Gastrocnemius medialis (tissue), 4 donors: ENCODE measurements at regions of chr12 and their contacts with region 1.

Region 1: DNA sequence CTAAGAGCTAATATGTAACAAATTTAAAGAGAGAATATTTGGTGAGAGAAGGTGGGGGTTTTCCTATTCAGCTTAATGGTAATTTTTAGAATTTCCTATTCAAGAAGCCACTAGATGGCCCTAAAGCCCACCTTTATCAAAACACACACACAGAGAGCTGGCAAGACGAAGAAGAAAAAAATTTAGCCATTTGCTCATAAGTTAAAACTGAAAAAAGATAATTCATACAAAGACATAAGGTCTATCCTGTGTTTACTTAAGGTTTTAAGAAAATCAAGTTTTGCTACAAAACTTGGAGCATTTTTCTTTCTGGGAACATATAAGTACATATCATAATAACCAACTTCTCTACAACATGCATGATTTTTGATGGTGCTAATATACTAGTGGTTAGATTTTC is 46.8 kb upstream of the PCED1B start:
- DNase-seq: no peak
- ATAC-seq: peak; percentile 77 to 83
- H3K4me3 ChIP-seq: no peak overlapping the region
- H3K27ac ChIP-seq: peak overlapping the region in 2 of 4 donors; percentile 18 to 74
- H3K4me1 ChIP-seq: peaks cover 0 to 5% of the 10 kb centered on the region in 2 donors
- H3K27me3 ChIP-seq: no peaks in the 10 kb centered on the region
- CTCF ChIP-seq: peak; percentile 15 to 66 (median 50)
- POLR2A ChIP-seq: no peak

Region 2: GRCh38 chr12:47071241-47071852 is 38.7 kb after region 1 on chr12:
- in situ Hi-C with region 1: no loop called
- intact Hi-C with region 1: loop called (anchors 5 kb)
- DNase-seq: no peak
- ATAC-seq: no peak
- H3K4me3 ChIP-seq: no peak overlapping the region
- H3K27ac ChIP-seq: no peak overlapping the region
- H3K4me1 ChIP-seq: no peaks in the 10 kb centered on the region
- H3K27me3 ChIP-seq: peaks cover 0 to 6% (median 0%) of the 10 kb centered on the region in 3 donors
- CTCF ChIP-seq: peak in 3 of 5 experiments; percentile 14 to 43 (median 15)
- POLR2A ChIP-seq: no peak

Region 3: DNA sequence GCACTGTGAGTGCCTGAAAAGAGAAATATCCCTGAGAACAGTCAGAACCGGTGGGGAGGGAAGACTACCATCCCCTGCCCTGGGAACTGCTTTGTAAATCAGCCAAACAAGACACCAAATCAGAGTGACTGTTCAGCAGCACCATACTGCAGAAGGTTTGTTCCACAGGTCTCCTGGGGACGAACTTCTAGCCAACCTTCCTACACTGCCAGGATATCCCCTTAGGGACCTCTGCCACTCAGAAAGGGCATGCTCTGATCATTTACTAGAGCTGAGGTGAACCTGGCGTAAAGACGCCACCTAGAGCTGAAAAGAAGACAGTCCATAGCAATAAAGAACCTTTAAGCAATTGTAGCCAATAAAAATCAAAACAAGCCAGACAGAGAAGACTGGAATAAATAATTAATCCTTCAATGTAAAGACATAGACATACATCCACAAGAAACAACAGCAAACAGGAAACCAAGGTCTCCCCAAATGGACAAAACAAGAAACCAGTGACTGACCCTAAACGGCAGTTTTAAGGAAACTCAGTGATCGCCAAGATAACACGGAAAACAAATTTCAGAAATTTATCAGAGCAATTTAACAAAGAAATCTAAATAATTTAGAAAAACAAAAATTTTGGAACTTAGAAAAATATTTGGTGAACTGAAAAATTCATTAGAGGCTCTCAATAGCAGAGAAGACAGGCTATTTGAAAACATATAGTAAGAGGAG is 275.2 kb after region 1 on chr12:
- in situ Hi-C with region 1: no loop called
- intact Hi-C with region 1: loop called (anchors 5 kb)
- DNase-seq: no peak
- ATAC-seq: no peak
- H3K4me3 ChIP-seq: no peak overlapping the region
- H3K27ac ChIP-seq: no peak overlapping the region
- H3K4me1 ChIP-seq: no peaks in the 10 kb centered on the region
- H3K27me3 ChIP-seq: no peaks in the 10 kb centered on the region
- CTCF ChIP-seq: peak in 1 of 5 experiments; percentile 22
- POLR2A ChIP-seq: no peak

Region 4: DNA sequence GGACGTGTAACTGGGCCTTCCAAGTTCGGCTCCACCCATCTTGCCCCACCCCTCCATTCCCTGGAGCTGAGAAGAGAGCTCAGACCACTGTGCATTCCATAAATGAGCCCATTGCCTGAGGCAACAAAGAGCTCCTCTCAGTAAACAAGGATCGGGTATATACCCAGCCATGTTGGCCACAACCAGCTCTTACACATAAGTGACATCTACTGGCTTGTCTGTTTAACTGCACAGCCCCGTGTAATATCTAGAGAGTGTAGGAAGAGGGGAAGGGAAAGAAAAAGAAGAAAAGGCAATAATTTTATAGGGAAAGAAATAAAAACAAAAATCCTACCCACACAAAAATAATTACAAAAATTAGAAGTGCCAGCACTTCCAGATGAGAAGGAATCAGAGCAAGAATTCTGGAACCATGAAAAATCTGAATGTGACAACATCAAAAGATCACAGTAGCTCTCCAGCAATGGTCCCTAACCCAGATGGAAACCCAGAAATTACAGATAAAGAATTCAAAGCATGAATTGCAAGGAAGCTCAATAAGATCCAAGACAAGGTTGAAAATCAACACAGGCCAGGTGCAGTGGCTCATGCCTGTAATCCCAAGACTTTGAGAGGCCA is 365.1 kb after region 1 on chr12:
- in situ Hi-C with region 1: loop called in 2 of 4 experiments (anchors 10 kb)
- intact Hi-C with region 1: loop called (anchors 2 kb)
- DNase-seq: peak in 1 of 2 donors; percentile 21
- ATAC-seq: peak in 1 of 2 donors; percentile 84
- H3K4me3 ChIP-seq: no peak overlapping the region
- H3K27ac ChIP-seq: no peak overlapping the region
- H3K4me1 ChIP-seq: peaks cover 0 to 7% of the 10 kb centered on the region in 2 donors
- H3K27me3 ChIP-seq: no peaks in the 10 kb centered on the region
- CTCF ChIP-seq: peak in 3 of 5 experiments; percentile 13 to 44 (median 21)
- POLR2A ChIP-seq: no peak

Region 5: GRCh38 chr12:47636908-47637780 is 604.5 kb after region 1 on chr12:
- in situ Hi-C with region 1: no loop called
- intact Hi-C with region 1: loop called (anchors 5 kb)
- DNase-seq: no peak
- ATAC-seq: no peak
- H3K4me3 ChIP-seq: no peak overlapping the region
- H3K27ac ChIP-seq: no peak overlapping the region
- H3K4me1 ChIP-seq: no peaks in the 10 kb centered on the region
- H3K27me3 ChIP-seq: no peaks in the 10 kb centered on the region
- CTCF ChIP-seq: peak in 1 of 5 experiments; percentile 23
- POLR2A ChIP-seq: no peak

Region 6: GRCh38 chr12:47651368-47652254 is 619.0 kb after region 1 on chr12:
- in situ Hi-C with region 1: loop called in 1 of 4 experiments (anchors 25 kb)
- intact Hi-C with region 1: no loop called
- DNase-seq: peak; percentile 19 to 32
- ATAC-seq: peak; percentile 77 to 85
- H3K4me3 ChIP-seq: peak overlapping the region in 3 of 4 donors; percentile 8 to 13 (median 10)
- H3K27ac ChIP-seq: no peak overlapping the region
- H3K4me1 ChIP-seq: no peaks in the 10 kb centered on the region
- H3K27me3 ChIP-seq: no peaks in the 10 kb centered on the region
- CTCF ChIP-seq: peak; percentile 49 to 74 (median 54)
- POLR2A ChIP-seq: no peak

Region 7: DNA sequence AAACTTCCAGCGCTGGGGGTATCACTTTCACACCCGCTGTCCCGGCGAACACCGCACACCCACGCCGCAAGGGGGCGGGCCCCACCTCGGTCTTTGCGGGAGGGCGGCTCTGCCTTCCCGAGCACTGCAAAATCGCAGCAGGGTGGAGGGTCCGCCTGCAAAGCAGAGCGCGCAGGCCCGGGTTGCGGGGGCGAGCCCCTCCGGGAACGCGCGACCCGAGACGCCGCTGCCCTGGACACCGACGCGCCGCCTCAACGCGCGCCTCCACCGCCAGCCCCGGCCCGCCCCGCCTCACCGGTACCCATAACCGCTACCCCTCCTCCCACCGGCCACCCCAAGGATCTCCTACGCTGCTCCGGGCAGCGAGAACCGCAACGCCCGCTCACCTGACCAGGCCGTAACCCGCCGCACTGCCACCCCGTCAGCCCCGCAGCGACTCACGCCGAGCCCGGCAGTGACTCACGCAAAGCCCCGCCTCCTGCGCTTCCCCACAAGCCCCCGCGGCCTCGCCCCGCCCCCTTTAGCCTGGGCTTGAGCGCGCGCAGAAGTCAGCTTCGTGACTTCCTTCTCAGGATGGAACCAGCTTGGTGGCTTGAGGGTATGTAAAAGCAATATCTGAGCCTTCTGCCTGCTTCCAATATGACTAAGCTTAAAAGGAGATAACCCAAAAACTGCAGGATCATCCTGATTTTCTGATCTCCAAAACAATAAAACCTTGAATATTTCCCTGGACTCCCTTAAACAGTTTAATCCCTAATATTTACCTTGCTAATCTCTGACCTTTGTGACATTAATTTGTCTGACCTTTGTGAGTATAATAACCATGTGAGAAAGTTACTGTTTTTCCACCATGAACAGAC is 673.2 kb after region 1 on chr12 and contains the start of gene RPAP3:
- in situ Hi-C with region 1: no loop called
- intact Hi-C with region 1: loop called (anchors 10 kb)
- DNase-seq: peak; percentile 93 to 96
- ATAC-seq: peak; percentile 97
- H3K4me3 ChIP-seq: peak within 1 kb of the TSS; percentile 72 to 84 (median 80)
- H3K27ac ChIP-seq: peak within 1 kb of the TSS; percentile 88 to 90 (median 90)
- H3K4me1 ChIP-seq: peaks cover 9 to 18% of the 10 kb centered on the region in 2 donors
- H3K27me3 ChIP-seq: no peaks in the 10 kb centered on the region
- CTCF ChIP-seq: peak; percentile 71 to 84 (median 80)
- POLR2A ChIP-seq: peak; percentile 67 to 75
- total RNA-seq, gene RPAP3: 15.1 to 24.8 (median 20.5) TPM